Naive thymus-derived CD8-positive, alpha-beta T cell (primary cell): ENCODE measurements at regions of chr1 and their contacts with region 1.

Region 1: GRCh38 chr1:236795035-236795756 is at the start of gene MTR:
- DNase-seq: peak; percentile 87 to 98 (median 95)
- ATAC-seq: peak; percentile 88 to 92
- H3K4me3 Mint-ChIP-seq: peak within 1 kb of the TSS; percentile 92 to 98 (median 95)
- H3K27ac Mint-ChIP-seq: peak within 1 kb of the TSS; percentile 96 to 100 (median 98)
- H3K4me1 Mint-ChIP-seq: peaks cover 33 to 42% (median 38%) of the 10 kb centered on the region in 4 donors
- H3K27me3 Mint-ChIP-seq: peaks cover 0 to 8% (median 0%) of the 10 kb centered on the region in 5 donors
- polyA plus RNA-seq, gene MTR: 14.8 to 25.6 (median 18.3) TPM

Region 2: GRCh38 chr1:236689713-236690569 is 105.3 kb before region 1 on chr1:
- POLR2A ChIA-PET with region 1: no interaction called
- DNase-seq: no peak
- ATAC-seq: no peak
- H3K4me3 Mint-ChIP-seq: no peak overlapping the region
- H3K27ac Mint-ChIP-seq: no peak overlapping the region
- H3K4me1 Mint-ChIP-seq: peaks cover 8 to 22% (median 17%) of the 10 kb centered on the region in 4 donors
- H3K27me3 Mint-ChIP-seq: peaks cover 35 to 73% (median 60%) of the 10 kb centered on the region in 5 donors

Region 3: GRCh38 chr1:236768601-236769000 is 26.6 kb before region 1 on chr1:
- POLR2A ChIA-PET with region 1: interaction called, 11 read pairs
- DNase-seq: no peak
- ATAC-seq: no peak
- H3K4me3 Mint-ChIP-seq: no peak overlapping the region
- H3K27ac Mint-ChIP-seq: no peak overlapping the region
- H3K4me1 Mint-ChIP-seq: no peaks in the 10 kb centered on the region
- H3K27me3 Mint-ChIP-seq: peaks cover 3 to 56% (median 14%) of the 10 kb centered on the region in 5 donors

Region 4: GRCh38 chr1:236862615-236863211 is 67.5 kb after region 1 on chr1:
- POLR2A ChIA-PET with region 1: interaction called, 20 read pairs
- DNase-seq: peak in 4 of 10 donors; percentile 22 to 50 (median 36)
- ATAC-seq: peak; percentile 68 to 71
- H3K4me3 Mint-ChIP-seq: peak overlapping the region; percentile 7 to 84 (median 70)
- H3K27ac Mint-ChIP-seq: peak overlapping the region; percentile 59 to 97 (median 90)
- H3K4me1 Mint-ChIP-seq: peaks cover 27 to 45% (median 36%) of the 10 kb centered on the region in 4 donors
- H3K27me3 Mint-ChIP-seq: no peaks in the 10 kb centered on the region